ENCODE measurements at regions of chr20 and their contacts with region 1.

Region 1: GRCh38 chr20:40962730-40963504 is 65.7 kb upstream of the TOP1 start:
- DNase-seq: peak; percentile 61
- ATAC-seq: peak; percentile 81
- H3K4me3 Mint-ChIP-seq: no peak overlapping the region
- H3K27ac Mint-ChIP-seq: no peak overlapping the region
- H3K4me1 Mint-ChIP-seq: peaks cover 5% of the 10 kb centered on the region
- H3K27me3 Mint-ChIP-seq: peaks cover 5% of the 10 kb centered on the region
- CTCF ChIP-seq: peak; percentile 52

Region 2: DNA sequence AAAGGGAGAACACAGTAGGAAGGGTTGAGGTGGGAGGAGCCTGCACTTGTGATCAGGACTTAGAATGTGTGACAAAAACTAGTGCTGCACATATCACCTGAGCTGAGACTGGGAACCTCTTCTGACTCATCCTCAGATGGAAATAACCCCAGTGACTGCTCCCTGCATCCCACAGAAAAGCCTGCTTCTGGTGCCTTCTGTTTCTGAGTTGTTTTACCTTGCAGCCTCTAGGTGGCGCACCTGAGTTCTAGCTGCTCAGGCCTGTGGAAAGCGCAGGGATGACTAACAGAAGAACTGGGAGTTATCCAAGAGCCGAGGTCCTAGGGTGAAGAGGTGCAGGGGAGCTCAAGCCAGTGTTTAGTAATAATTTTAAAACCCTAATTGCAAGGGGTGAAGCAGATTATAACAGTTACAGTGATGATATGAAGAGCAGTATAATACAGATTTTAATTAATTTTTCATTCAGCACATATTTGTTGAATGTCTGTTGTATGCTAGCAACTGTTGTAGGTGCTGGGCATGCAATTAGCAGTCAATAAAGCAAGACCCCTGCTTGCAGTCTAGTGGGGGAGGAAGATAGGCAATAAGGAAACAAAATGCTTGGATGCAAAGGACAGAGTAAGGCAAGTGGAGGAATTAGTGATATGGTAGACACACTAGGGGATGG is 1698.3 kb before region 1 on chr20:
- CTCF ChIA-PET with region 1: interaction called, 16 read pairs
- POLR2A ChIA-PET with region 1: no interaction called
- intact Hi-C with region 1: loop called (anchors 1 kb)
- DNase-seq: no peak
- ATAC-seq: no peak
- H3K4me3 Mint-ChIP-seq: no peak overlapping the region
- H3K27ac Mint-ChIP-seq: no peak overlapping the region
- H3K4me1 Mint-ChIP-seq: no peaks in the 10 kb centered on the region
- H3K27me3 Mint-ChIP-seq: peaks cover 6% of the 10 kb centered on the region
- CTCF ChIP-seq: peak; percentile 74

Region 3: GRCh38 chr20:40702504-40702903 is 260.4 kb before region 1 on chr20:
- CTCF ChIA-PET with region 1: no interaction called
- POLR2A ChIA-PET with region 1: no interaction called
- intact Hi-C with region 1: loop called (anchors 5 kb)
- DNase-seq: no peak
- ATAC-seq: no peak
- H3K4me3 Mint-ChIP-seq: no peak overlapping the region
- H3K27ac Mint-ChIP-seq: no peak overlapping the region
- H3K4me1 Mint-ChIP-seq: no peaks in the 10 kb centered on the region
- H3K27me3 Mint-ChIP-seq: peaks cover 18% of the 10 kb centered on the region
- CTCF ChIP-seq: no peak

Region 4: GRCh38 chr20:40741507-40742106 is 221.3 kb before region 1 on chr20:
- CTCF ChIA-PET with region 1: interaction called, 13 read pairs
- POLR2A ChIA-PET with region 1: interaction called, 3 read pairs
- intact Hi-C with region 1: loop called (anchors 1 kb)
- DNase-seq: no peak
- ATAC-seq: no peak
- H3K4me3 Mint-ChIP-seq: no peak overlapping the region
- H3K27ac Mint-ChIP-seq: no peak overlapping the region
- H3K4me1 Mint-ChIP-seq: peaks cover 16% of the 10 kb centered on the region
- H3K27me3 Mint-ChIP-seq: peaks cover 7% of the 10 kb centered on the region
- CTCF ChIP-seq: no peak

Region 5: DNA sequence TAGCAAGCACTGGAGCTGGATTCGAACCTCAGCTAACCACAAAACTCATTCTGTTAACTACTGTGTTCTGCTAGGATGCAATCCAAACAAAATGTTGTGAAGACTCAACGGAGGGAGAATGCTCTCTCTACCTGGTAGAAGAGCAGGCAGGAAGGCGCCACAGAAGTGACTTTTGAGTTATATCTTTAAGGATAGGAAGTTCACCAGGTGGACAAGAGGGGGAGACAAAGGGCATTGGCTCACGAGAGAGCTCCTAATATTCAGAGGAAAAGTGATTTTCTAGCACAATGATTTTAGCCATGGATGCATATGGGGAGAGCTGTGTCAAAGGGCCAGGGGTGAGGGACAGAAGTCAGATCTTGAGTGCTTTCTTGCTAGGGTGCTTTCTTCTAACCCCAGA is 165.5 kb before region 1 on chr20:
- CTCF ChIA-PET with region 1: interaction called, 14 read pairs
- POLR2A ChIA-PET with region 1: no interaction called
- intact Hi-C with region 1: loop called (anchors 1 kb)
- DNase-seq: no peak
- ATAC-seq: no peak
- H3K4me3 Mint-ChIP-seq: no peak overlapping the region
- H3K27ac Mint-ChIP-seq: no peak overlapping the region
- H3K4me1 Mint-ChIP-seq: no peaks in the 10 kb centered on the region
- H3K27me3 Mint-ChIP-seq: peaks cover 5% of the 10 kb centered on the region
- CTCF ChIP-seq: no peak